Endothelial cell of umbilical vein (primary cell): ENCODE measurements at regions of chr6 and their contacts with region 1.

Region 1: GRCh38 chr6:125974214-125974866 is 12.0 kb upstream of the TRMT11 start:
- DNase-seq: peak; percentile 73
- H3K4me3 ChIP-seq: no peak overlapping the region
- H3K27ac ChIP-seq: no peak overlapping the region
- H3K4me1 ChIP-seq: no peaks in the 10 kb centered on the region
- H3K27me3 ChIP-seq: no peaks in the 10 kb centered on the region
- CTCF ChIP-seq: peak; percentile 19 to 33
- POLR2A ChIP-seq: no peak

Region 2: GRCh38 chr6:125858427-125859320 is 115.7 kb before region 1 on chr6:
- CTCF ChIA-PET with region 1: interaction called, 15 read pairs
- POLR2A ChIA-PET with region 1: no interaction called
- dilution Hi-C with region 1: no loop called
- intact Hi-C with region 1: loop called (anchors 5 kb)
- DNase-seq: peak; percentile 68
- H3K4me3 ChIP-seq: no peak overlapping the region
- H3K27ac ChIP-seq: no peak overlapping the region
- H3K4me1 ChIP-seq: no peaks in the 10 kb centered on the region
- H3K27me3 ChIP-seq: no peaks in the 10 kb centered on the region
- CTCF ChIP-seq: peak; percentile 69 to 73
- POLR2A ChIP-seq: no peak

Region 3: GRCh38 chr6:125906158-125906998 is 68.0 kb before region 1 on chr6:
- CTCF ChIA-PET with region 1: interaction called, 22 read pairs
- POLR2A ChIA-PET with region 1: no interaction called
- dilution Hi-C with region 1: no loop called
- intact Hi-C with region 1: no loop called
- DNase-seq: peak; percentile 65
- H3K4me3 ChIP-seq: no peak overlapping the region
- H3K27ac ChIP-seq: no peak overlapping the region
- H3K4me1 ChIP-seq: peaks cover 26% of the 10 kb centered on the region
- H3K27me3 ChIP-seq: no peaks in the 10 kb centered on the region
- CTCF ChIP-seq: peak; percentile 80 to 83
- POLR2A ChIP-seq: no peak

Region 4: GRCh38 chr6:125923987-125924568 is 50.3 kb before region 1 on chr6:
- CTCF ChIA-PET with region 1: no interaction called
- POLR2A ChIA-PET with region 1: no interaction called
- dilution Hi-C with region 1: no loop called
- intact Hi-C with region 1: no loop called
- DNase-seq: no peak
- H3K4me3 ChIP-seq: no peak overlapping the region
- H3K27ac ChIP-seq: no peak overlapping the region
- H3K4me1 ChIP-seq: peaks cover 4% of the 10 kb centered on the region
- H3K27me3 ChIP-seq: no peaks in the 10 kb centered on the region
- CTCF ChIP-seq: no peak
- POLR2A ChIP-seq: no peak

Region 5: GRCh38 chr6:125963817-125964216 is 10.5 kb before region 1 on chr6:
- CTCF ChIA-PET with region 1: interaction called, 40 read pairs
- POLR2A ChIA-PET with region 1: no interaction called
- dilution Hi-C with region 1: no loop called
- intact Hi-C with region 1: no loop called
- DNase-seq: no peak
- H3K4me3 ChIP-seq: no peak overlapping the region
- H3K27ac ChIP-seq: no peak overlapping the region
- H3K4me1 ChIP-seq: no peaks in the 10 kb centered on the region
- H3K27me3 ChIP-seq: no peaks in the 10 kb centered on the region
- CTCF ChIP-seq: no peak
- POLR2A ChIP-seq: no peak